Activated T-helper 1 cell treated with anti-CD3 and anti-CD28 coated beads, Interleukin-12 subunit alpha, Interleukin-12 subunit beta, Interleukin-2, Interleukin-4 antibody, amounts not matched to agents 30 ng/mL and 10 ng/mL and 1 ng/mL, durations not matched to agents 14 hours and 24 hours and 36 hours (primary cell): ENCODE measurements at regions of chr16 and their contacts with region 1.

Region 1: DNA sequence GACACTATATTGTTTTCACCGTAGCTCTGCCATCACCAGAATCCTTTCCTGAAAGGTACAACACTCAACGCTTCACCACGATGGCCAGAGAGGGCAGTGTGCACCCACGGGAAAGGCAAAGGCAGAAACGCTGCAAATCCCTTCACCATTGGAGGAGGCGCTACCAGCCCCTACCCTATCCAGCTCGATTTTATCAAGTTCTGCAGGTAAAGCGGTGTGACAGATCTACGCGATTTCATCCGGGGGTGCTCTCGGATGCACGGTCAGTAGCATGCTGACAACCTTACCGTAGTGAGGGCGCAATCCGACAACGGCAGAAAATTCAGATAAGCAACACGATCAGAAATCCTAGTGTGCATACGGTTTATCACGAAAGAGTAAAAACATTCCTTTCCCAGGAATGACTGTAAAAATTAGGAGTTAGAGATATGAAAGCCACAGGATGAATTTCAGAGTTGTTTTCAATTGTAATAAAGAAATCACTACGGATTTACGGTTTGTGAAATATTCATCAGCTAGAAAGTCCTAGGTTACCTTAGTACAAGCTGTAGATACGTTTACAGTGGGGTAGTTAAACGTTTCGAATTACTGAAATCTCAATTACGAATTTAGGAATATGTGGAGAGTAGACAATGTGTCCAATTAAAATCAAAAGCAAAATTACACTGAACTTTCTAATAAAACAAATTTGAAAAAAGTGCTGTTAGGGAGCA is 1.8 kb downstream of the NETO2 start:
- DNase-seq: peak; percentile 79
- H3K4me3 Mint-ChIP-seq: peak overlapping the region; percentile 90
- H3K27ac Mint-ChIP-seq: peak overlapping the region; percentile 53
- H3K4me1 Mint-ChIP-seq: peaks cover 50% of the 10 kb centered on the region
- H3K27me3 Mint-ChIP-seq: peaks cover 16% of the 10 kb centered on the region

Region 2: DNA sequence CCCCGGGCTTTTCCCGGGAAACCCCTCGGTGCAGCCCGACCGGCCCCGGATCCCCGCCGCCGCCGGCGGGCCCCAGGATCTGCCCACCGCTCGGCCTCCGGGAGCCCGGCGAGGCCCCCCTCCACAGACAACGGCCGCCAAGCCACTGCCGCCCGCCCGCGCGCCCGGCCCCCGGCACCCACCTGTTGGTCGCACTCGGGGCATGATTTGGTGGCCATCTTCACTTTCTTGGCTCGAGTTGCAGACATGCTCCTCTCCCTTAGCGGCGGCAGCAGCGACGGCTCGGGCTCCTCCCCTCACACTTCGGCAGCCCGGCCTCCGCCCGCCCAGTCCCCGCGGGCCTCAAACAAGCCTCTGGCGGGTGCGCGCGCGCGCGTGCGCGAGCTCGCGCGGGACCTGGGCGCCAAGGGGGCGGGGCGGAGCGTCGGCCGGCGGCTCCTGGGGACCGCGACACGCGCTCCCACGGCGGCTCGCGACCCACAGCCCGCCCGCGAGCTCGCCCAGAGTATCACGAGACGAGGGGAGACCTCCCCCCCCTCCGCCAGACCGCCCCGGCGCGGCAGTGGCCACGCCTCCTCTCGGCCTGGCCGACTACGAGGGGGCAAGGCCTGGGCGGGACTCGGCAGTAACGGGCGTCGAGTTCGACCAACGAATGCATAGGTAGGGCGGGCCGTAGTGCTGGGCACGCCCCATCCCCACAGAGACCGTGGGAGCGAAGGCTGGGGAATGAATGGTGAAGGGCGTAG is 310.9 kb before region 1 on chr16 and contains the start of gene C16orf87:
- intact Hi-C with region 1: loop called (anchors 2 kb)
- DNase-seq: peak; percentile 90
- H3K4me3 Mint-ChIP-seq: peak within 1 kb of the TSS; percentile 97
- H3K27ac Mint-ChIP-seq: peak within 1 kb of the TSS; percentile 98
- H3K4me1 Mint-ChIP-seq: peaks cover 40% of the 10 kb centered on the region
- H3K27me3 Mint-ChIP-seq: peaks cover 10% of the 10 kb centered on the region
- total RNA-seq, gene C16orf87: 40.8 and 44.5 TPM in 2 replicates

Region 3: GRCh38 chr16:46986896-46987295 is 155.0 kb before region 1 on chr16:
- intact Hi-C with region 1: no loop called
- DNase-seq: no peak
- H3K4me3 Mint-ChIP-seq: no peak overlapping the region
- H3K27ac Mint-ChIP-seq: no peak overlapping the region
- H3K4me1 Mint-ChIP-seq: no peaks in the 10 kb centered on the region
- H3K27me3 Mint-ChIP-seq: no peaks in the 10 kb centered on the region

Region 4: DNA sequence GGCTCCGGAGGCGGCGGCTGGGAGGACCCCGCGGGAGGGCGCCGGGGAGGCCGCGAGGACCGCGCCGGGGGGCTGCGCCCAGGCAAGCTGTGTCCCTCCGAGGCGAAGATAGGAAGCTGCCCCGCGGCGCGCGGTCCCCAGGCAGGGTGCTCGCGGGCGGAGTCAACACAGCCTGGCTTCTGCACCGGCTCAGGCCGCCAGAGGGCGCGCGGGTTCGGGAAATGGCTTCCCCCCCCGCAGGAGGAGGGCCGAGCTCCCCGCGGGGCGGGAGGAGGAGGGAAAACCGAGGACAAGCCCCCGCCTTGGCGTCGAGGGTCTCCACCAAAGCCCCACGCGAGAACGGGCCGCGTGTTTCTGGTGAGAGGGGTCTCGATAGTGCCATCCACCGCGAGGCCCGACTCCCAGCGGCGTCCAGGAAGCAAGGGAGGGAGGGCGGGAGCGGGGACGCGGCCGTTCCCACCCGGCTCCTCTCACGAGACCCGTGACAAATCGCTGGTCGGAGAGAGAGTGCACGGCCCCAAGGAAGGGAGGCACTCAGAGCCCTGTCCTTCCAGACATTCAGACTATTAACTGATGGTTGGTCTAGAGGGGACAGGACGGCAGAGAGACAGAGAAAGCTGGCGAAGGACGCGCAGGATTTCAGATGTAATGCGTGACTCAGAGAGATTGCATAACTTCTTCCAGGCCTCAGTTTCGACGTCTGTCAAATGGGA is 104.0 kb before region 1 on chr16:
- intact Hi-C with region 1: loop called (anchors 1 kb)
- DNase-seq: peak; percentile 85
- H3K4me3 Mint-ChIP-seq: peak overlapping the region; percentile 81
- H3K27ac Mint-ChIP-seq: no peak overlapping the region
- H3K4me1 Mint-ChIP-seq: peaks cover 4% of the 10 kb centered on the region
- H3K27me3 Mint-ChIP-seq: peaks cover 14% of the 10 kb centered on the region

Region 5: DNA sequence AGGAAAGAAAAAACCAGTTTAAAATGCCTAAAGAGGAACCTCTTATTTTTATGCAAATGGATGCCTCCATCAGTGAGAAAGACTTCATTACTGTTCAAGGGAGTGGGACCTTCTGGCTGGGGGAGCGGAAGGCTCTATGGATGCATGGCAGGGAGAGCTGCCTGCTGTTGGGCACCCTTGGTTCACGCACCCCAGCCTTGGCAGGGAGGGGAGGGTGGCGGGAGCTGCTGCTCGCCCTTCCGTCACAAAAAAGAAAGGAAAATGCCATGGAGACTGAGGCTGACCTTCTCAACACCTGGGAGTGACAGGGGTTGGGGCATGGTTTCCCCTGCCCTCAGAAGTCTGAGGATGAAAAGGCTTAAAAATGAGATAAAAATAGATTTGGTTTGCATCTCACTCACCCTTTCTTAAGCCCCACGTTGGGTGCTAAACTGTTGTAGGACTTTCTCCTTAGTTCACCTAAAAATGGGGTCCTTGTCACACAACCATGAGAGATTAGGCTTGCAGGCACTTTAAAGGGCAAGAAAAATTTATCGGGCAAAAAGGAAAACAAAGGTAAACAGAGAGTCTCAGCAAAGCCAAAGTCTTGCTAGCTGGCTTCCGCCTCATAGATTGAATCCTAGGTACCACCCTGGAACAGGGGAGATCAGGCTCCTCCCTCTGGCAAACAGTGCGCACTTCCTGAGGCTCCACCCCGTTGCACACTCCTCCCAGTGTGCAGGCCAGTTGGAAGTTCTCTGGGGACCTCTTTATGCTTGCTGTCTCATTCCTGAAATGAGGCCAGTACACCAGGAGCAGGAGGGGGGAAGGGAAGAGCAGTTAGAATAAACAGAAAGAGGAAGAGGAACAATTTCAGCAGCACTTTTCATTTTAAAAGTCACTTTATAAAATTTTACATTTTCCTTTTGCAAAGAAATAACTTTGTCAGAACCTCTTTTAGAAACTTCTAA is 350.8 kb after region 1 on chr16:
- intact Hi-C with region 1: no loop called
- DNase-seq: no peak
- H3K4me3 Mint-ChIP-seq: peak overlapping the region; percentile 66
- H3K27ac Mint-ChIP-seq: peak overlapping the region; percentile 72
- H3K4me1 Mint-ChIP-seq: peaks cover 26% of the 10 kb centered on the region
- H3K27me3 Mint-ChIP-seq: no peaks in the 10 kb centered on the region

Region 6: GRCh38 chr16:47574091-47575054 is 432.4 kb after region 1 on chr16:
- intact Hi-C with region 1: loop called (anchors 2 kb)
- DNase-seq: no peak
- H3K4me3 Mint-ChIP-seq: peak overlapping the region; percentile 5
- H3K27ac Mint-ChIP-seq: peak overlapping the region; percentile 45
- H3K4me1 Mint-ChIP-seq: peaks cover 55% of the 10 kb centered on the region
- H3K27me3 Mint-ChIP-seq: no peaks in the 10 kb centered on the region

Region 7: GRCh38 chr16:48054881-48055601 is 913.1 kb after region 1 on chr16:
- intact Hi-C with region 1: loop called (anchors 1 kb)
- DNase-seq: peak; percentile 11
- H3K4me3 Mint-ChIP-seq: no peak overlapping the region
- H3K27ac Mint-ChIP-seq: no peak overlapping the region
- H3K4me1 Mint-ChIP-seq: peaks cover 8% of the 10 kb centered on the region
- H3K27me3 Mint-ChIP-seq: peaks cover 25% of the 10 kb centered on the region

Region 8: DNA sequence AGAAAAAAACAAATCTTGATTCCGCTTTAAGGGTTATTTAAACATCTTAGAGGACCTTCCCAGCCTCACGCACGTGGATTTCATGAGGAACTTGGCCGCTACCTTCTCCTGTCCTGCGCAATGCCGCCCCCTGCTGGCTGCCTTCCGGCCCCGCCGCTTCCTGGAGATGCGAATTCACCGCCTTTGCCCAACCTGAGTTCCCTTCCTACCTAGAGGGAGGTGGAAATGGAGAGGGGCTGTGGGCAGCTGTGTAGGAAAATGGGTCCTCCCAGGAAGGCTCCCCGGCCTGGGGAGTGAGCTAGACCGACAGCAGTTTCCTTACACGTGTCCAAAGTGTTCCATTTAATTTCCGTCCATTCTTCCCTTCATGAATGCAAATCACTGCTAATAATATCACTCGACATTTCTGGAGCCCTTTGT is 1014.9 kb after region 1 on chr16:
- intact Hi-C with region 1: loop called (anchors 1 kb)
- DNase-seq: peak; percentile 66
- H3K4me3 Mint-ChIP-seq: no peak overlapping the region
- H3K27ac Mint-ChIP-seq: peak overlapping the region; percentile 31
- H3K4me1 Mint-ChIP-seq: peaks cover 31% of the 10 kb centered on the region
- H3K27me3 Mint-ChIP-seq: peaks cover 9% of the 10 kb centered on the region